PC-9 (cell line): ENCODE measurements at regions of chr17 and their contacts with region 1.

Region 1: DNA sequence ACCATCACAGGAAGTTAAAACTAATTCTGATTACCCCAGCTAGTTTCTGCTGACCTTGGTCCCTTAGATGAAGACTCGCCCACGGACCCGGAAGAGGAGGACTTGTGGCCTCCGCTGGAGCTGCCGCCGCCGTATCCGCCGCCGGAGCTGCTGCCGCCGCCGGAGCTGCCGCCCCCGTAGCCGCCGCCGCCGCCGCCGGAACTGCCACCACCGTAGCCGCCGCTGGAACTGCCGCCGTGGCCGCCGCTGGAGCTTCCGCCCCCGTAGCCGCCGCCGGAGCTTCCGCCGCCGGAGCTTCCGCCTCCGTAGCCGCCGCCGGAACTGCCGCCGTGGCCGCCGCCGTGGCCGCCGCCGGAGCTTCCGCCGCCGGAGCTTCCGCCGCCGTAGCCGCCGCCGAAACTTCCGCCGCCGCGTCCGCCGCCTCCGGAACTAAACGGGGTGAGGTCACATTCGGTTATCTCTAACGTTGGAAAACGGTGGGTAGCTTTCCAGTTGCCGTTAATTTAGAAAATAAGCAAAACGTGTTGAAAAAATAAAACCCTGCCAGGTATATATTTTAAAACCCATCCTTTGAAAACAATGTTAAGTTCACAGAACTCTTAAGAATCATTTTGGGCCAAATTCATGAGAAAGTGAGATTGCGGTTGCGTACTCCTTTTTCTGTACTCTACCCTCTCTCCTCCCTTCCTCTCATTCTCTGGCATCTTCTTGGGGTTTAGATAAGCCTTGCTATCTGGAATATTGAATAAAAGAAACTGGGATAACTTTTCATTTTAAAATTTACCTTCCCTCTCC is 3.5 kb downstream of the KRT10 start:
- DNase-seq: peak; percentile 59 to 84
- H3K4me3 ChIP-seq: peak overlapping the region; percentile 83
- H3K27ac ChIP-seq: peak overlapping the region; percentile 83
- H3K4me1 ChIP-seq: peaks cover 25% of the 10 kb centered on the region
- H3K27me3 ChIP-seq: no peaks in the 10 kb centered on the region
- CTCF ChIP-seq: 0 out of 2 replicates have a peak, but pooled peaks have one; percentile 18

Region 2: GRCh38 chr17:40399185-40399584 is 419.7 kb before region 1 on chr17:
- CTCF ChIA-PET with region 1: no interaction called
- POLR2A ChIA-PET with region 1: interaction called, 15 read pairs
- intact Hi-C with region 1: no loop called
- DNase-seq: peak in 1 of 2 experiments; percentile 48
- H3K4me3 ChIP-seq: no peak overlapping the region
- H3K27ac ChIP-seq: no peak overlapping the region
- H3K4me1 ChIP-seq: no peaks in the 10 kb centered on the region
- H3K27me3 ChIP-seq: no peaks in the 10 kb centered on the region
- CTCF ChIP-seq: peak; percentile 70

Region 3: GRCh38 chr17:40526668-40527067 is 292.3 kb before region 1 on chr17:
- CTCF ChIA-PET with region 1: no interaction called
- POLR2A ChIA-PET with region 1: no interaction called
- intact Hi-C with region 1: no loop called
- DNase-seq: peak in 1 of 2 experiments; percentile 15
- H3K4me3 ChIP-seq: no peak overlapping the region
- H3K27ac ChIP-seq: no peak overlapping the region
- H3K4me1 ChIP-seq: peaks cover 35% of the 10 kb centered on the region
- H3K27me3 ChIP-seq: no peaks in the 10 kb centered on the region
- CTCF ChIP-seq: no peak

Region 4: DNA sequence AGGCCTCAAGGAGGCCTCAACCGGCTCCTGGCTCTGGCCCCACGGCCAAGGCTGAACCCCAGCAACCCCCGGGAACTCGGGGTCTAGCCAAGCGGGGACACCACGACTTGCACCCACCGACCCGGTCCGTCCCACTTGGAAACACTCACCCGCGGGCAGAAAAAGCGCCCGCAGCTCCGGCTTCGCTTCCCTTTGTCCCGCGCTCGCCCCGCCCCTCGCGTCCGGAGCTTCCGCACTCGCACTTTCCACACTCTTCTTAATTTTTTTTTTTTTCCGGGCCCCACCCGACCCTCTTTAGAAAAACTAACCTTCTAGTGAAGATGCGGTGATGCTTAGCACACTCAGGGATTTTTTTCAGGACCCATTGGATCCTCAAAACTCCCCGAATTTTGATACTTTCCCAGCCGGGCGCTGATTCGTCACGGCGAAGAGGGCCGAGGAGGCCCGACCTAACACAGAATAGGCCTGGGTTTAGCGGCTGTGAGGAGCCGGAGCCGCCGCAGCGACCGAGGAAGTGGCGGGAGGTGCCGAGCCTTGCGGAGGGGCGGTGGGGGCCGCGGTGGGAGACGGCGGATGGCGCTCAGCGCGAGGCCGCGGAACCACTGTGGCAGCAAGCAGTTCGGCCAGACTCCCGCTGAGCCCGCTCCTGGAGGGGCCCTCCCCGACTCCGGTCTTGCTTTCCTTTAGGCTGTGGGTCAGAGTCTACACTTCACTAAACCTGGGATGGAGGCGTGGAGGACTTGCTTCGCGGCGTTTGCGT is 171.1 kb before region 1 on chr17 and contains the start of gene SMARCE1:
- CTCF ChIA-PET with region 1: no interaction called
- POLR2A ChIA-PET with region 1: interaction called, 15 read pairs
- intact Hi-C with region 1: no loop called
- DNase-seq: peak; percentile 52 to 60
- H3K4me3 ChIP-seq: peak within 1 kb of the TSS; percentile 89
- H3K27ac ChIP-seq: peak within 1 kb of the TSS; percentile 89
- H3K4me1 ChIP-seq: peaks cover 21% of the 10 kb centered on the region
- H3K27me3 ChIP-seq: no peaks in the 10 kb centered on the region
- CTCF ChIP-seq: no peak
- total RNA-seq, gene SMARCE1: 75.0 and 90.8 TPM in 2 replicates

Region 5: GRCh38 chr17:40846515-40847155 is 27.7 kb after region 1 on chr17:
- CTCF ChIA-PET with region 1: no interaction called
- POLR2A ChIA-PET with region 1: interaction called, 11 read pairs
- intact Hi-C with region 1: loop called (anchors 1 kb)
- DNase-seq: no peak
- H3K4me3 ChIP-seq: no peak overlapping the region
- H3K27ac ChIP-seq: 0 out of 2 replicates have a peak overlapping the region, but pooled peaks have one; percentile 4
- H3K4me1 ChIP-seq: peaks cover 45% of the 10 kb centered on the region
- H3K27me3 ChIP-seq: no peaks in the 10 kb centered on the region
- CTCF ChIP-seq: no peak

Region 6: DNA sequence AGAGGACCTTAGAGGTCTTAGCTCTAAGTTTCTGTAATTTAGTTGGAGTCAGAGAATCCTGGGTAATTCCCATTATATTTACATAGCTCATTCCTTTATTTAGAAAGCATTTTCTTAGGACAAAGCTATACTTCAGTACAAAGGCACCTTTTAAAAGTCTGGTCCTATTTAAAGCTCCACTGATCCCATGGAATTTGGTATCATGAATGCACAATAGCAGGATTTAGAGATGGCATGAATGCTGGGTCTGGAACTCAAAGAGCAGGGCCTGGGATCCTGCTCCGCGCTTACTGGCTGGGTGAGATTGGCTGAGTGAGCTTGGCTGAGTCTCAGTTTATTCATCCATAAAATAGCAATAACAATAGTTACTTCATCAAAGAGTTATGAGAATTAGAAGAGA is 113.7 kb after region 1 on chr17:
- CTCF ChIA-PET with region 1: no interaction called
- POLR2A ChIA-PET with region 1: interaction called, 10 read pairs
- intact Hi-C with region 1: no loop called
- DNase-seq: no peak
- H3K4me3 ChIP-seq: no peak overlapping the region
- H3K27ac ChIP-seq: no peak overlapping the region
- H3K4me1 ChIP-seq: peaks cover 13% of the 10 kb centered on the region; the same call in 1 of the 2 replicates
- H3K27me3 ChIP-seq: no peaks in the 10 kb centered on the region
- CTCF ChIP-seq: no peak

Region 7: DNA sequence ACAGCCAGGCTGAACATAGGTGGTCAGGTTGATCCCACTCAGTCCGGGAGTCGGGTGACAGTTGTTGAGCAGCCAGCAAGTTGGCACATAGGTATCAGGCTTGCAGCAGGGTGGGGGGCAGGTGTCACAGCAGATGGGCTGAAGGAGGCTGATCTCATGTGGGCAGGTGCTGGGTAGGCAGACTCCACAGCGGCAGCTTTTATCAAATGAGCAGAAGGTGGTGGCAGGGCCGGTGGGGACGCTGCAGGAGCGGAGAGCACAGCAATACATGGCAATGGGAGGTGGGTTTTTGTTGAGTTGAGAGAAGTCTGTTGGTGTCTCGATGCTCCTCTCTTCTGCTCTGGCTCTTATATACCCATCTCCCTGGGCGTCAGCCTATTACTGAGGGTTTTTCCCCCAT is 189.9 kb after region 1 on chr17 and contains the start of gene KRTAP3-1:
- CTCF ChIA-PET with region 1: no interaction called
- POLR2A ChIA-PET with region 1: no interaction called
- intact Hi-C with region 1: no loop called
- DNase-seq: no peak
- H3K4me3 ChIP-seq: no peak within 1 kb of the TSS
- H3K27ac ChIP-seq: peak within 1 kb of the TSS; percentile 59
- H3K4me1 ChIP-seq: peaks cover 51% of the 10 kb centered on the region
- H3K27me3 ChIP-seq: no peaks in the 10 kb centered on the region
- CTCF ChIP-seq: no peak
- total RNA-seq, gene KRTAP3-1: not detected in 2 replicates

Region 8: GRCh38 chr17:41417576-41418015 is 598.7 kb after region 1 on chr17:
- CTCF ChIA-PET with region 1: no interaction called
- POLR2A ChIA-PET with region 1: interaction called, 20 read pairs
- intact Hi-C with region 1: no loop called
- DNase-seq: peak; percentile 69 to 98
- H3K4me3 ChIP-seq: no peak overlapping the region
- H3K27ac ChIP-seq: peak overlapping the region; percentile 89
- H3K4me1 ChIP-seq: peaks cover 76% of the 10 kb centered on the region
- H3K27me3 ChIP-seq: no peaks in the 10 kb centered on the region
- CTCF ChIP-seq: peak; percentile 82

Region 9: DNA sequence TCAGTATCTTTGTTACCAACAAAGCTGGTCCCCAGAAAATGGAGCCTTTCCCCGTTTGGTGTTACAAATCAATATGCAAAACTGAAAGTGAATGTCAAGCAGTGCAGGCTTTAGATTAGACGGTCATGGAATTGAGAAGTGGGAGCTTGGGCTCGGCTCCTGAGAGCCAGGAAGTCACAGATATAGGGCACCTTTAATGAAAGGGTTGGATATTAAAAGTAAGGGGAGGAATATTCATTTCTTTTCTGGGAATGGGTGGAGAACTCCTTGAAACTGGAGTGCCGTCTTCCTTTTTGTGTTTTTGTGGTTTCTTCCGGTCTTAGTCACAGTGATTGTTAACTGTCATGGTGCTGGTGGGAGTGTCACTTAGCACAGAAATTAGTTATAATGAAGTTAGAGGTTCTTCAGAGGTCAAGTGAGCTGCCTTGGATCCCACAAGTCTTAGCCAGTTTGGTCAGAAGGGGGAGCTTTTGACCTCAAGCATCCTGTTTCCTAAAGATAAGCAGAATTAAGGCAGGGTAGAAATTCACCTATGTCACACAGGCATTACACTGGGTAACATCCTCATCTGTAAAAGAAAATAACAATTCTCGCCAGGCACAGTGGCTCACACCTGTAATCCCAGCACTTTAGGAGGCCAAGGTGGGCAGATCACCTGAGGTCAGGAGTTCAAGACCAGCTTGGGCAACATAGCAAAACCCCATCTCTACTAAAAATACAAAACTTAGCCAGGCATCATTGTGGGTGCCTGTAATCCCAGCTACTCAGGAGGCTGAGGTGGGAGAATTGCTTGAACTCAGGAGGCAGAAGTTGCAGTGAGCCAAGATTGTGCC is 860.2 kb after region 1 on chr17:
- CTCF ChIA-PET with region 1: interaction called, 4 read pairs
- POLR2A ChIA-PET with region 1: interaction called, 10 read pairs
- intact Hi-C with region 1: no loop called
- DNase-seq: peak; percentile 67 to 88
- H3K4me3 ChIP-seq: peak overlapping the region; percentile 50
- H3K27ac ChIP-seq: peak overlapping the region; percentile 94
- H3K4me1 ChIP-seq: peaks cover 24% of the 10 kb centered on the region
- H3K27me3 ChIP-seq: no peaks in the 10 kb centered on the region
- CTCF ChIP-seq: peak; percentile 28; the same call in 1 of the 2 replicates